Activated T-helper 1 cell treated with anti-CD3 and anti-CD28 coated beads, Interleukin-12 subunit alpha, Interleukin-12 subunit beta, Interleukin-2, Interleukin-4 antibody, amounts not matched to agents 30 ng/mL and 10 ng/mL and 1 ng/mL, durations not matched to agents 14 hours and 24 hours and 36 hours (primary cell): ENCODE measurements at regions of chr19 and their contacts with region 1.

Region 1: GRCh38 chr19:49301165-49301865 is 23.7 kb downstream of the SLC6A16 start:
- DNase-seq: peak; percentile 59
- H3K4me3 Mint-ChIP-seq: no peak overlapping the region
- H3K27ac Mint-ChIP-seq: no peak overlapping the region
- H3K4me1 Mint-ChIP-seq: no peaks in the 10 kb centered on the region
- H3K27me3 Mint-ChIP-seq: peaks cover 11% of the 10 kb centered on the region

Region 2: DNA sequence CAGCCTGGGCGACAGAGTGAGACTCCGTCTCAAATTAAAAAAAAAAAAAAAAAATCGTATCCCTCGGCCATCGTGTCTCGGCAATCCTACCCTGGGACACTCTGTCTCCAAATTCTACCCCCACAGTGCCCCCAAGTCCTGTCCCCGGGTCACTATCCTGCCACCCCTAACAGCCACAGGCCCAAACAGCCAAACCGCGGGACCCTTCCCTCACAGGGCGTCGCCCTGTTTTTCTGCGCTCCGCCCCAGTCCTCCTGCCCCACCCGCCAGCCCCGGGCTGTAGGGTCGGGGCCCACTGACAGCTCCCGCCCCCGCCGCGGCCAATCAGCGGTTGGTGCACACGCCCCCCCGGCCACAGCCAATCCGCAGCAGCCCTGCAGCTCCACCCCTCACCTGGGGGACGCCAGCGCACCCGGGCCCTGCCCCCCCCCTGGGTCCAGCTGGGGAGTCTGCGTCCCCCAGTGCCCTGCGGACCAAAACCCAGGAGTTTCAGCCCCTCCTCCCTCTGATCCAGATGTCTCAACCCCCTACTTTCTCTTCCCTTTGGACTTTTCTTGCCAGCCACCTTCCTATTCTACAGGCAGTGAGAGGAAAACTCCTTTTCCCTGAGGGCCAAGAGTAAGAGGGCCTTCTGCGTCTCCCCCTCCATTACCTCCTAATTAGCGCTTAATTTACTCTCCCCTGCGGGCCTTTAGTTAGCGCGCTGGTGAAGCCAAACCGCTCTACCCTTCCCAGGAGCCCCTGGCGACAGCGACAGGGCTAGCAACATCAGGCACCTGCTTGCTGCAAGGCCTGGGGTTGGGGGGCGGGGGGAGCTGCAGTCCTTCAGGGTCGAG is 489.0 kb before region 1 on chr19:
- intact Hi-C with region 1: no loop called
- DNase-seq: peak; percentile 58
- H3K4me3 Mint-ChIP-seq: peak overlapping the region; percentile 76
- H3K27ac Mint-ChIP-seq: no peak overlapping the region
- H3K4me1 Mint-ChIP-seq: peaks cover 33% of the 10 kb centered on the region
- H3K27me3 Mint-ChIP-seq: peaks cover 2% of the 10 kb centered on the region

Region 3: DNA sequence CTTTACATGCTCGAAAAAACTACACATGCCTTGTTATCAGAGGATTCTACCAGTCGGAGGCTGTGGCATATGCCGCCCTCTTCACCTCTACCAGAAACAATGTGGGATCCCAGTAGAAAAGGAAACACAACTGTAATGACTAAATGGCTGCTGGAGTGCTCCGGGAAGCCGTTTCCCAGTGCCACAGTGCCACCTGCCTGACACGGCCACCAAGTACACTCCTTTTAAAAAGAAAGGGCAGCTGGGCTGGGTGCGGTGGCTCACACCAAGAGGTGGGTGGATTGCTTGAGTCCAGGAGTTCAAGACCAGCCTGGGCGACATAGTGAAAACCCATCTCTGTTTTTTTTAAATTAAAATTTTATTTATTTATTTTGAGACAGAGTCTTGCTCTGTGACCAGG is 76.5 kb before region 1 on chr19:
- intact Hi-C with region 1: loop called (anchors 1 kb)
- DNase-seq: peak; percentile 14
- H3K4me3 Mint-ChIP-seq: no peak overlapping the region
- H3K27ac Mint-ChIP-seq: no peak overlapping the region
- H3K4me1 Mint-ChIP-seq: peaks cover 7% of the 10 kb centered on the region
- H3K27me3 Mint-ChIP-seq: peaks cover 10% of the 10 kb centered on the region

Region 4: GRCh38 chr19:49327878-49328544 is 26.7 kb after region 1 on chr19:
- intact Hi-C with region 1: loop called (anchors 1 kb)
- DNase-seq: peak; percentile 32
- H3K4me3 Mint-ChIP-seq: no peak overlapping the region
- H3K27ac Mint-ChIP-seq: peak overlapping the region; percentile 19
- H3K4me1 Mint-ChIP-seq: peaks cover 47% of the 10 kb centered on the region
- H3K27me3 Mint-ChIP-seq: no peaks in the 10 kb centered on the region